PC-9 (cell line): ENCODE measurements at regions of chr4 and their contacts with region 1.

Region 1: GRCh38 chr4:140090215-140090731 is 63.7 kb downstream of the MAML3 start:
- DNase-seq: peak; percentile 50 to 91
- H3K4me3 ChIP-seq: no peak overlapping the region; the same call in 1 of the 2 replicates
- H3K27ac ChIP-seq: peak overlapping the region; percentile 92
- H3K4me1 ChIP-seq: peaks cover 84% of the 10 kb centered on the region
- H3K27me3 ChIP-seq: no peaks in the 10 kb centered on the region
- CTCF ChIP-seq: no peak

Region 2: GRCh38 chr4:140019619-140020347 is 70.5 kb before region 1 on chr4:
- CTCF ChIA-PET with region 1: no interaction called
- POLR2A ChIA-PET with region 1: no interaction called
- intact Hi-C with region 1: loop called (anchors 1 kb)
- DNase-seq: peak in 1 of 2 experiments; percentile 48
- H3K4me3 ChIP-seq: no peak overlapping the region
- H3K27ac ChIP-seq: peak overlapping the region; percentile 93
- H3K4me1 ChIP-seq: peaks cover 50% of the 10 kb centered on the region
- H3K27me3 ChIP-seq: no peaks in the 10 kb centered on the region
- CTCF ChIP-seq: no peak

Region 3: DNA sequence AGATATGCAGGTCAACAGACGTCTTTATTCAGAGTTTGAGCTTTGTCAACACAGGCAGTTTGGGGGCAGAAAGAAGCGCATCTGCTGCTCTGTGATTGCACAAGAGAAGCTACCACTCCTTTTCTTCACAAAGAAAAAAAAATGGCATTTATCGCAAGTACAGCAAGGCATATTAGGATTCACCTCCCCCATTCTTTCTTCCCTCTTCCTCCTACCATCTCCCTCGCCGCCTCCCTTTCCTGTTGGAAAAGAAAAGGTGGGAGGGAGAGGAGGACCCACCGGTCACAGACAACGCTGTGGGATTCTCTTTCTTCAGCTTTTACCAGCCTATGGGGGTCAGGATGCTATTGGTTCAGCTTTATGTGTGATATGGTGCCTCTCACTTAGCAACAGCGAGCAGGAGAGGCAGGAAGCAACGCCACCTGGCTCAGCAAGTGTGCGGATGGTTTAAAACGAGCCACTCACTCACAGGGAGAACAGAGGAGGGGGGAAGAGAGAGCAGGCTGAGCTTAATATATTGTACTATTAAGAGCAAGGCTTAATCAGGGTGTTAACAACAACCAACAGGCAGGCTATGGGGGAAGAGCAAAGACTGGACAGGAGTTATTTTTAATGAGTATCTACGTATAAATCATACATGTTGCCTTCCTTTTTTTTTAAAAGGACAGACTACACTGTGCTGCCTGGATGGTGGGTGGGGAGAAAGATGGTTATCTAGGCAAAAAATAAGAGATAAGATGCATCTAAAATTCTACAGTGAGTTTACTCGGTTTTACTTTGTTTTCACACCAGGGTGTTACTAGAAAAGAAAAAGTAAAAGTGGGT is 41.0 kb before region 1 on chr4:
- CTCF ChIA-PET with region 1: no interaction called
- POLR2A ChIA-PET with region 1: interaction called, 7 read pairs
- intact Hi-C with region 1: loop called (anchors 2 kb)
- DNase-seq: peak; percentile 59 to 62
- H3K4me3 ChIP-seq: peak overlapping the region; percentile 56
- H3K27ac ChIP-seq: peak overlapping the region; percentile 96
- H3K4me1 ChIP-seq: peaks cover 62% of the 10 kb centered on the region
- H3K27me3 ChIP-seq: no peaks in the 10 kb centered on the region
- CTCF ChIP-seq: no peak

Region 4: GRCh38 chr4:140061194-140061593 is 29.1 kb before region 1 on chr4:
- CTCF ChIA-PET with region 1: no interaction called
- POLR2A ChIA-PET with region 1: no interaction called
- intact Hi-C with region 1: no loop called
- DNase-seq: no peak
- H3K4me3 ChIP-seq: no peak overlapping the region
- H3K27ac ChIP-seq: peak overlapping the region; percentile 37
- H3K4me1 ChIP-seq: peaks cover 38% of the 10 kb centered on the region
- H3K27me3 ChIP-seq: no peaks in the 10 kb centered on the region
- CTCF ChIP-seq: no peak

Region 5: DNA sequence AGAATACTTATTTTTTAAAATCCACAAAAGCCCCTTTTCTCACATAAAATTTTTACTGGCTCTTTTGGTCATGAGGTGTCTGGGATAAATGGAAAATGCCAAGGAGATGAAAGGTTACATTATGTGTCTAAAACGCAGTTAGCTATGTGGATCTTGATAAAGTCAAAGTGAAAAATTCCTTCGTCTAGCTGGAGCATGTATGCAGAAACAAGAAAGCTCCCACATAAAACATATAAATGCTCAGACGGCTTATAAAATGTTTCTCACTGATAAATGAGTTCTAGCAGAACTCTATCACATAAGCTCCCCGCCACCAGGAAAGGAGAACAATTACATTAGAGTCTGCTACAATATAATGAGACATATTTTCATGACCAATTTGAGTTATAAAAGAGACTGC is 582.1 kb after region 1 on chr4:
- CTCF ChIA-PET with region 1: no interaction called
- POLR2A ChIA-PET with region 1: no interaction called
- intact Hi-C with region 1: no loop called
- DNase-seq: no peak
- H3K4me3 ChIP-seq: no peak overlapping the region
- H3K27ac ChIP-seq: no peak overlapping the region
- H3K4me1 ChIP-seq: no peaks in the 10 kb centered on the region
- H3K27me3 ChIP-seq: no peaks in the 10 kb centered on the region
- CTCF ChIP-seq: no peak